ENCODE measurements at regions of chr7 and their contacts with region 1.

Region 1: GRCh38 chr7:28037220-28038010 is 143.2 kb downstream of the JAZF1 start:
- DNase-seq: peak; percentile 95
- H3K4me3 ChIP-seq: no peak overlapping the region
- H3K27ac ChIP-seq: peak overlapping the region; percentile 77
- H3K4me1 ChIP-seq: peaks cover 23% of the 10 kb centered on the region
- H3K27me3 ChIP-seq: no peaks in the 10 kb centered on the region
- CTCF ChIP-seq: no peak
- POLR2A ChIP-seq: no peak

Region 2: DNA sequence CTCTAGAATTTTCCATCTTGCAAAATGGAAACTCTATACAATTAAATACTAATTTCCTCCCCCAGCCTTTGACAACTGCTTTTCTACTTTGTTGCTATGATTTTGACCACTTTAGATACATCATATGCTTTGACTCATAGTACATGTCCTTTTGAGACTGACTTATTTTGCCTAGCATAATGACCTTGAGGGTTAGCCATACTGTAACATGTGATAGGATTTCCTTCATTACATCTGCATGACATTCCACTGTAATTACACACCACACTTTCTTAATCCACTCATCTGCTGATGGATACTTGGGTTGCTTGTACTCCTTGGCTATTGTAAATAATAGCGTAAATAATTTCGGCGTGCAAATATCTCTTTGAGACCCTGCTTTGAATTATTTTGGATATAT is 15.5 kb after region 1 on chr7:
- CTCF ChIA-PET with region 1: interaction called, 3 read pairs
- POLR2A ChIA-PET with region 1: interaction called, 4 read pairs
- dilution Hi-C with region 1: no loop called
- intact Hi-C with region 1: loop called (anchors 1 kb)
- DNase-seq: peak; percentile 82
- H3K4me3 ChIP-seq: no peak overlapping the region
- H3K27ac ChIP-seq: peak overlapping the region; percentile 16
- H3K4me1 ChIP-seq: peaks cover 18% of the 10 kb centered on the region
- H3K27me3 ChIP-seq: no peaks in the 10 kb centered on the region
- CTCF ChIP-seq: no peak
- POLR2A ChIP-seq: no peak

Region 3: GRCh38 chr7:28062197-28062991 is 25.0 kb after region 1 on chr7:
- CTCF ChIA-PET with region 1: interaction called, 17 read pairs
- POLR2A ChIA-PET with region 1: no interaction called
- dilution Hi-C with region 1: no loop called
- intact Hi-C with region 1: no loop called
- DNase-seq: peak; percentile 59
- H3K4me3 ChIP-seq: no peak overlapping the region
- H3K27ac ChIP-seq: no peak overlapping the region
- H3K4me1 ChIP-seq: peaks cover 6% of the 10 kb centered on the region
- H3K27me3 ChIP-seq: no peaks in the 10 kb centered on the region
- CTCF ChIP-seq: peak; percentile 67 to 77
- POLR2A ChIP-seq: no peak